Body of pancreas (tissue), 4 donors: ENCODE measurements at regions of chr19 and their contacts with region 1.

Region 1: DNA sequence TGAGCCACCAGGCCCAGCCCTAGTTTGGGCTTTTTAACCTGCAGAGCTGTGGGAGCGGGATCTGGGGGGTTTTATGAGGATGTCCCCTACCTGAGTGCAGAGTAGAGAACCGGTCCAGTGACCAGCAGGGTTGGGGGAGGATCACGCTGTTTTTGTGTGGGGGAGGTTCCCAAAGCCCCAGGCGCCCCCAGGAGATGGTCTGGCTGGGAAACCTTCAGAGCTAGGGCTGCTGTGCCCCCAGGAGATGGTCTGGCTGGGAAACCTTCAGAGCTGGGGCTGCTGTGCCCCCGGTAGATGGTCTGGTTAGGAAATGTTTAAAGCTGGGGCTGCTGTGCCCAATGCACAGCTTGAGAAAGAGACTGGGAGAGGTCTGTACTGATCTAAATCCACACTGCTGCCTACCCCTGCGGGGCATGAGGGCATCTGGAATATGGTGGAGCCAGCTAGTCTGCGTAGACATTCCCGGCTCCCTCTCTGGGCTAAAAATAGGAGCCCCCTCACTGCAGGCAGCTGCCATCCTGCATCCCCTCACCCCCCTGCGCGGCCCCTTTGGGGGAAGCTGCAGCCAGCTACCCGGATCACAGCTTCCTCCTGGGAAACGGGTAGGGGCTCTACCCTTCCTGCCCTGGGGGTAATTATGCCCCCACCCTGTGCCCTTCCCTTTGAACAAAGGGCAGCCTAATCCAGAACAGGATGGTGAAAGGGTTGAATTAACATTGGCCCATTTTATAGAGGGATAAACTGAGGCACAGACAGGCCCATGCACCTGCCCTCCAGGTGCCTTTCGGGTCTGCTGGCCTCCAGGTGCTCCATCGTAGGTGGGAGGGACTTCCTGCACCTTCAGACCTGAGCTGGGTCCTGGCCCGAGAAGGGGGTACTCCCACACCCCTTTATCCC is 2.3 kb upstream of the ARID3A start:
- DNase-seq: no peak
- ATAC-seq: no peak
- H3K4me3 ChIP-seq: no peak overlapping the region
- H3K27ac ChIP-seq: no peak overlapping the region
- H3K4me1 ChIP-seq: peaks cover 46% of the 10 kb centered on the region
- H3K27me3 ChIP-seq: peaks cover 0 to 11% of the 10 kb centered on the region in 2 donors
- CTCF ChIP-seq: no peak
- POLR2A ChIP-seq: no peak

Region 2: DNA sequence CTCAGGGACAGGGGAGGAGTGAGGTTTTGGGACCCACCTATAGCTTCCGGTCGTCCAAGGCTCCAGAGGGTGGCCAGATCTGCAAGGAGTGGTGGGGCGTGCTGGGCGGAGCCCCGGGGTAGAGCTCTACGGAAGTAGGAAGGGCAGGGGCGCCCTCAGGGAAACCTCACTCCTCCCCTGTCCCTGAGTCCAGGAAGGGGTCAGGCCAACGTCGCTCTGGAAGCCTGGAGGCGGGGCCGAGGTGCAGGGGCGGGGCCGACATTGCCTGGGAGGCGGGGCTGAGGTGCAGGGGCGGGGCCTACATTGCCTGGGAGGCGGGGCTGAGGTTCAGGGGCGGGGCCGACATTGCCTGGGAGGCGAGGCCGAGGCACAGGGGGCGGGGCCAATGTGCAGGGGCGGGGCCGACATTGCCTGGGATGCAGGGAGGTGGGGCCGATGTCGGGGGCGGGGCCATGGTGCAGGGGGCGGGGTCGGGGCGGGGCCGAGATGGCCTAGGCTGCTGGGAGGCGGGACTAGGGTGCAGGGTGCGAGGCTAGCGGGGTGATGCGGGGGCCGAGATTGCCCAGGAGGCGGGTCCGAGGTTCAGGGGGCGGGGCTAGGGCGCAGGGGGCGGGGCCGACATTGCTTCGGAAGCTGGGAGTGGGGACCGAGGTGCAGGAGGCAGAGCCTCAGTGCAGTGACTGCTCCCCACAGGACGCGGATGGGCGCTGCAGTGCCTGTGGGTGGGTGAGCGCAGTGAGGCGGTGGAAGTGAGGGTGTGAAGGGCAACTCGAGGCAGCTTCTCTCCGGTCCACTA is 219.7 kb before region 1 on chr19:
- intact Hi-C with region 1: no loop called
- DNase-seq: peak; percentile 55 to 74 (median 71)
- ATAC-seq: peak; percentile 54
- H3K4me3 ChIP-seq: no peak overlapping the region
- H3K27ac ChIP-seq: no peak overlapping the region
- H3K4me1 ChIP-seq: peaks cover 10% of the 10 kb centered on the region
- H3K27me3 ChIP-seq: peaks cover 0 to 7% of the 10 kb centered on the region in 2 donors
- CTCF ChIP-seq: no peak
- POLR2A ChIP-seq: peak in 1 of 3 donors; percentile 16

Region 3: GRCh38 chr19:977058-977692 is 53.6 kb after region 1 on chr19:
- intact Hi-C with region 1: loop called (anchors 2 kb)
- DNase-seq: peak in 1 of 4 donors; percentile 12
- ATAC-seq: no peak
- H3K4me3 ChIP-seq: no peak overlapping the region
- H3K27ac ChIP-seq: no peak overlapping the region
- H3K4me1 ChIP-seq: peaks cover 11% of the 10 kb centered on the region
- H3K27me3 ChIP-seq: no peaks in the 10 kb centered on the region
- CTCF ChIP-seq: no peak
- POLR2A ChIP-seq: no peak

Region 4: DNA sequence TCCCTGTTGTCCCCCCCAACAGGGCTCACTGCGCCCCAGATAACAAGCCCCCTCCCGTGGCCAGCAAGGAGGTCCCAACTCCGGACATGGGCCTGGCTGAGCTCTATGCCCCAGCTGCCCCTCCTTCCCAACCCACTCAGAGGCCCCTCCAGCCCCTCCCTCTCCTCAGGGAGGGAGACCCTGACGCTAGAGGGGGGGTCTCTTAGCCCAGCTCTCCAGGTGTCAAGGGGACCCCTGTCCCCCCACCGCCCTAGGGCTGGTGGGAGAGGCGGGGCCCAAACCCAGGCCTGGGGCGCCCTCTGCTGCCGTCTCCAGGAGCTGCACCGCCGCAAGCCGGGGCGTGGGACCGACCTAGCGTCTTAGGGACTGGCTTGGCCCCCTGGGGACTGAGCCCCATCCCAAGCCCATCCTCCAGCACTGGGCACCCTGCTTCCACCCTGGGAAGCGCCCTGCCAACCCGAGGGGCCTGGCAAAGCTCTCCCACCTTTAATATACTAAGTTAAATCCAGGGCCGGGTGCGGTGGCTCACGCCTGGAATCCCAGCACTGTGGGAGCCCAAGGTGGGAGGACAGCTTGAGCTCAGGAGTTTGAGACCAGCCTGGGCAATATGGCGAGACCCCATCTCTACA is 78.1 kb after region 1 on chr19:
- intact Hi-C with region 1: no loop called
- DNase-seq: peak in 3 of 4 donors; percentile 49 to 62 (median 60)
- ATAC-seq: peak; percentile 70
- H3K4me3 ChIP-seq: no peak overlapping the region
- H3K27ac ChIP-seq: no peak overlapping the region
- H3K4me1 ChIP-seq: peaks cover 17% of the 10 kb centered on the region
- H3K27me3 ChIP-seq: peaks cover 0 to 25% of the 10 kb centered on the region in 2 donors
- CTCF ChIP-seq: peak; percentile 76 to 96 (median 83)
- POLR2A ChIP-seq: no peak

Region 5: GRCh38 chr19:1223018-1223855 is 299.7 kb after region 1 on chr19:
- intact Hi-C with region 1: no loop called
- DNase-seq: peak in 1 of 4 donors; percentile 45
- ATAC-seq: no peak
- H3K4me3 ChIP-seq: no peak overlapping the region
- H3K27ac ChIP-seq: no peak overlapping the region
- H3K4me1 ChIP-seq: peaks cover 11% of the 10 kb centered on the region
- H3K27me3 ChIP-seq: no peaks in the 10 kb centered on the region
- CTCF ChIP-seq: peak in 4 of 7 experiments; percentile 18 to 33 (median 26)
- POLR2A ChIP-seq: no peak

Region 6: GRCh38 chr19:1521636-1522035 is 598.1 kb after region 1 on chr19:
- intact Hi-C with region 1: no loop called
- DNase-seq: no peak
- ATAC-seq: no peak
- H3K4me3 ChIP-seq: no peak overlapping the region
- H3K27ac ChIP-seq: no peak overlapping the region
- H3K4me1 ChIP-seq: peaks cover 11% of the 10 kb centered on the region
- H3K27me3 ChIP-seq: peaks cover 0 to 20% of the 10 kb centered on the region in 2 donors
- CTCF ChIP-seq: no peak
- POLR2A ChIP-seq: no peak